PC-3 (cell line): ENCODE measurements at regions of chrX and their contacts with region 1.

Region 1: GRCh38 chrX:81957900-81958545 is 756.1 kb downstream of the SH3BGRL start:
- DNase-seq: peak; percentile 50
- ATAC-seq: peak; percentile 70
- H3K4me3 ChIP-seq: no peak overlapping the region
- H3K27ac ChIP-seq: no peak overlapping the region
- H3K4me1 ChIP-seq: no peaks in the 10 kb centered on the region
- H3K27me3 ChIP-seq: no peaks in the 10 kb centered on the region
- CTCF ChIP-seq: peak; percentile 61

Region 2: DNA sequence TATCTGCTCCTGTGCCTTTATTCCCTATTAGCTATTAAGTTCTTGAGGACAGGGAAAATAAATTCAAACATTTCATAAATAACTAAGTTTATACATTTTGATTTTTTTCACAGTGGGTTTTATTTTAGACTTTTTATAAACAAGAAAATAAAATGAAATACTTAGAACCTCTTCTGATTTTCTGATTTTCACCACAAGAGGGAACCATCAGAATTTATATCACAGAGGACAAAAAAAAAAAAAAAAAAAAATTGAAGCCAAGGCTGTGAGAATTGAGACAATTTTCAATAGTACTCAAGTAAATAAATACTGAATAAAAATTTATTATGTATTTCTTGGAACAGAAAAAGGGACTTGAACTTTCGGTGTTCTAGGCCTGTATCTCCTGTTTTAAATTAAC is 468.0 kb before region 1 on chrX:
- CTCF ChIA-PET with region 1: no interaction called
- POLR2A ChIA-PET with region 1: no interaction called
- intact Hi-C with region 1: loop called (anchors 5 kb)
- DNase-seq: peak; percentile 21
- ATAC-seq: no peak
- H3K4me3 ChIP-seq: no peak overlapping the region
- H3K27ac ChIP-seq: no peak overlapping the region
- H3K4me1 ChIP-seq: no peaks in the 10 kb centered on the region
- H3K27me3 ChIP-seq: no peaks in the 10 kb centered on the region
- CTCF ChIP-seq: peak; percentile 44; the same call in 1 of the 2 replicates

Region 3: DNA sequence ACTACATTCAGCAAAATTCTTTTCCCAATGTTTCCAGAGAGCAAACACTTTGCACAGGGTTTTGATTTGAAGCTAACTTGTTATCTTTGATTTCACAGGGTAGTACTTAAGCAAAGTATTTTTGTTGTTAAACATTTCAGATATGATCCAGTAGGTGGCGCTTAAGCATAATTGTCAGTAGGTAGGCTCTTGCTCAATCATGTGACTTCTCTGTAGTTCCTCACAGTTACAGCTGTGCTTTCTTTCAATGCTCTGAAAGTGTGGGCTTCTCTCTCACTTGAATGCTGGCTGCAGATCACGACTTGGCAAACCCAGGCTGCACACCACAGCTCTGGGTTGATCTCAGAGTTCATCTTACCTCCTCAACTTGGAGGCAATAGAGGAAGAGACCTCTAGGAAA is 260.3 kb after region 1 on chrX:
- CTCF ChIA-PET with region 1: no interaction called
- POLR2A ChIA-PET with region 1: no interaction called
- intact Hi-C with region 1: loop called (anchors 5 kb)
- DNase-seq: peak; percentile 55
- ATAC-seq: peak; percentile 60
- H3K4me3 ChIP-seq: no peak overlapping the region
- H3K27ac ChIP-seq: no peak overlapping the region
- H3K4me1 ChIP-seq: no peaks in the 10 kb centered on the region
- H3K27me3 ChIP-seq: no peaks in the 10 kb centered on the region
- CTCF ChIP-seq: peak; percentile 67

Region 4: GRCh38 chrX:82320554-82320953 is 362.5 kb after region 1 on chrX:
- CTCF ChIA-PET with region 1: no interaction called
- POLR2A ChIA-PET with region 1: no interaction called
- intact Hi-C with region 1: loop called (anchors 10 kb)
- DNase-seq: no peak
- ATAC-seq: peak; percentile 48; the same call in 1 of the 2 replicates
- H3K4me3 ChIP-seq: no peak overlapping the region
- H3K27ac ChIP-seq: no peak overlapping the region
- H3K4me1 ChIP-seq: no peaks in the 10 kb centered on the region
- H3K27me3 ChIP-seq: no peaks in the 10 kb centered on the region
- CTCF ChIP-seq: no peak